ENCODE measurements at regions of chr11 and their contacts with region 1.

Region 1: DNA sequence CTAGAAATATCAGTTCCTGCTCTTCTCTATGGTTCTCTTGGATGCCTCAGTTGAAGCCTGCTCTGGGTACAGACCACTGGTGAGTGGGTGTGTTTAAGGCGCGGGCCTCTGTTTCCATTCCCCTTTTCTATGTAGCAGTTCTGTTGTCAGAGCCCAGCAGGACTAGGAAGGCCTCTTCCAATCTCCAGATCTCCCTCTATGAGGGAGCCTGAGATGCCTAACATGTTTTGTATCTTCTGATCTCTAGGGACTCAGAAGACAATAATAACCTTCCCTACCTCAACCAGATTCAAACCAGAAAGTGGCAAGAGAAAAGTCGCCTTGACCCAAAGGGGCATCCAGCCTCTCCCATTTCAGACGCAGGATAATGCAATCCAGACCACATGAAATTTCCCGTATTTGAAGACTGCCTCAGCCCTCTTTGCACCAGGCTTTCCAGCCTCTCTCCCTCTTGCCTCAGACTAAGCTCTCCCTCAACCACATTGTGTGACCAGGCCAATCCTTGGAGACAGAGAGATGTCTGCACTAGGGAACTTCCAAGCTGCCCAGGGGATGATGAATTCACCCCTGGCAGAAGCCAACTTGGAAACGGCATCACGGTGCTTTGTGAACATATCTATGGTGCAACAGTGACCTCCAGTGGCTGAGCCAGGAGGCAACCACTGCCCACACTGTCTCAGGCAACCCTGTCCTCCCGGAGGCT is 150.1 kb upstream of the UBASH3B start:
- DNase-seq: peak in 4 of 5 donors; percentile 7 to 22 (median 20)
- H3K4me3 ChIP-seq: no peak overlapping the region
- H3K4me3 Mint-ChIP-seq: no peak overlapping the region
- H3K27ac ChIP-seq: no peak overlapping the region
- H3K27ac Mint-ChIP-seq: no peak overlapping the region
- H3K4me1 ChIP-seq: no peaks in the 10 kb centered on the region
- H3K4me1 Mint-ChIP-seq: no peaks in the 10 kb centered on the region
- H3K27me3 ChIP-seq: no peaks in the 10 kb centered on the region
- H3K27me3 Mint-ChIP-seq: peaks cover 27 to 28% of the 10 kb centered on the region in 2 donors

Region 2: DNA sequence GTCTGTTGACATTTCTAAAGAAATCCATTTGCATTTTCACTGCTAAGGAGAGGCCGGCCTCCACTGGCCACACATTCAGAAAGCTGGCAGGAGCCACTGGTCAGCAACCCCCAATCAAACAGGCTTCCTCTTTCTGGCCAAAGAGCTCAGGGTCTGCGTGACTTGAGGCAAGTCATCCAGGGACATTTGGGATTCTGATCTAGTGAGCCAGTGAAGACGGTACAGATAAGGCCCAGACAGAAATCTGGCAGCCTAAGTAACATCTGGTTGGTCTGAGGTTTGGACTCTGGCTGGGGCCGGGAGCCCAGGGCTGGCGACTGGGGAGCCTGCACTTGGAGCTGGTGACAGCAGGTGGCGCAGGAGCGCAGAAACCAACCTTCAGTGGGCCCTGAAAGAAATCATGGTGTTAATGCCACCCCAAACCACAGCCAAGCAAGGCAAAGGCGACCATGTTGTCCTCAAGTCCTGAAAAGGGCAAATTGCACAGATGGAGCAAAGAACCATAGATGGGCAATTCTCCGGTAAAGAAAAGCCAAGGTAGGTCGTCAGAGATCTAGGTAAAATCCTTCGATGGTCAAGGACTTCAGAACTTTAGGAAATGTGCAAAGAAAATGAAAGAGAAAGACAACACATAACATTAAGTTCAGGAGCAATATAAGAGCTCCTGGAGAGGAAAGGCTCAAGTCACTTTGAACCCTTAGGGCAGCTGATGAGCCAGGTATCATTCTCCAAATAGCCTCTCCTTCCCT is 290.0 kb before region 1 on chr11:
- CTCF ChIA-PET with region 1: interaction called, 3 read pairs
- POLR2A ChIA-PET with region 1: no interaction called
- intact Hi-C with region 1: loop called (anchors 2 kb)
- DNase-seq: no peak
- H3K4me3 ChIP-seq: no peak overlapping the region
- H3K4me3 Mint-ChIP-seq: no peak overlapping the region
- H3K27ac ChIP-seq: no peak overlapping the region
- H3K27ac Mint-ChIP-seq: no peak overlapping the region
- H3K4me1 ChIP-seq: no peaks in the 10 kb centered on the region
- H3K4me1 Mint-ChIP-seq: no peaks in the 10 kb centered on the region
- H3K27me3 ChIP-seq: no peaks in the 10 kb centered on the region
- H3K27me3 Mint-ChIP-seq: peaks cover 0 to 3% of the 10 kb centered on the region in 2 donors

Region 3: DNA sequence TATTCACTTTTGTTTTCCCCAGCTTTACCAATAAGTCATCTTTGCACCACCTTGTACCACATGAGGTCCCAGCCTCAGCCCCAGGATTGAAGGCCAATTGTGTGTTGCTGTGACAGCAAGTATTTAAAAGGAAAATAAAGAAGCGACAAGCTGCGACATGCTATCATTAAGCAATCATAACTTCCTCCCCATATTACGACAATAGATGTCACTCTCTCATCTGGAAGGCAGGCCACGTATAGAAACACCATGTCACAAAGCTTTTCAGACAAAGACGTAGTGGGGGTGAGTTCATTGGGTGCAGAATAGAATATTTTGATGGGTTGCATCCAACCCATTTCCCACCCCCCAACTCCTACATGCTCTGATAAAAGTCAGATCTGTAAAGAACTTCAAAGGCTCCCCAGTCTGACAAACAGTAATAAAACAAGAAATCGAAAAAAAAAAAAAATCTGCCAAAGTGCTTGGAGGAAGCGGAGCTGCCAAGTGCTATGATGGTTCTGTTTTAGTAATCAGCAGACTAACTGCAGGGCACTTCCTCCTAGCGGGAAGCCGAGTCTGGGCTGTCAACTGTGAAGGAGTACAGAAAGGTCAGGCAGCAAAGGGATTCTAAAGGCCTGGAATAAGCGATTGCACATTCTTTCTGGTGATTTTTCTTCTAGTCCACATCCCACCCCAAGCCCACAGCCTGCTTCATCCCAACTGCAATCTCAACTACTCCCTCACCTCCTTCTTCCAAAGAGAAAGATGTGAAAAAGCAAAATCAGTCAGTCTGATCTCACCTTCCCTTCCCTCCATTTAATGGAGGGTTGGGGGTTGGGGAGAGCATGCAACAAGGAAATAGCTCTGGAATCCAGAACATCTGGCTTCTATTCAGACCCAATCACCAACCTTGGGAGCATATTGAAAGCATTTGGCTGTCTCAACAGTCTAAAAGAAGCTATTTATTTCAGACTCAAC is 18.7 kb after region 1 on chr11:
- CTCF ChIA-PET with region 1: no interaction called
- POLR2A ChIA-PET with region 1: no interaction called
- intact Hi-C with region 1: no loop called
- DNase-seq: no peak
- H3K4me3 ChIP-seq: no peak overlapping the region
- H3K4me3 Mint-ChIP-seq: no peak overlapping the region
- H3K27ac ChIP-seq: no peak overlapping the region
- H3K27ac Mint-ChIP-seq: no peak overlapping the region
- H3K4me1 ChIP-seq: no peaks in the 10 kb centered on the region
- H3K4me1 Mint-ChIP-seq: peaks cover 0 to 4% (median under 1%) of the 10 kb centered on the region in 4 donors
- H3K27me3 ChIP-seq: no peaks in the 10 kb centered on the region
- H3K27me3 Mint-ChIP-seq: peaks cover 18 to 22% of the 10 kb centered on the region in 2 donors